ENCODE measurements at regions of chr3 and their contacts with region 1.

Region 1: GRCh38 chr3:50611464-50612233 is at the start of gene CISH:
- DNase-seq: peak; percentile 93 to 97
- H3K4me3 ChIP-seq: peak within 1 kb of the TSS; percentile 57 to 80
- H3K27ac ChIP-seq: peak within 1 kb of the TSS; percentile 75 to 78
- H3K4me1 ChIP-seq: peaks cover 0 to 57% (median 34%) of the 10 kb centered on the region in 4 donors
- H3K27me3 ChIP-seq: no peaks in the 10 kb centered on the region
- CTCF ChIP-seq: peak in 1 of 2 experiments; percentile 46

Region 2: GRCh38 chr3:50572158-50572557 is 39.5 kb before region 1 on chr3:
- intact Hi-C with region 1: loop called (anchors 1 kb)
- DNase-seq: peak; percentile 60 to 80
- H3K4me3 ChIP-seq: no peak overlapping the region
- H3K27ac ChIP-seq: peak overlapping the region in 1 of 2 donors; percentile 29
- H3K4me1 ChIP-seq: peaks cover 0 to 30% (median 19%) of the 10 kb centered on the region in 4 donors
- H3K27me3 ChIP-seq: no peaks in the 10 kb centered on the region
- CTCF ChIP-seq: peak; percentile 94 to 97

Region 3: GRCh38 chr3:50627407-50628051 is 15.9 kb after region 1 on chr3:
- intact Hi-C with region 1: no loop called
- DNase-seq: no peak
- H3K4me3 ChIP-seq: no peak overlapping the region
- H3K27ac ChIP-seq: no peak overlapping the region
- H3K4me1 ChIP-seq: peaks cover 0 to 24% (median 9%) of the 10 kb centered on the region in 4 donors
- H3K27me3 ChIP-seq: no peaks in the 10 kb centered on the region
- CTCF ChIP-seq: no peak

Region 4: DNA sequence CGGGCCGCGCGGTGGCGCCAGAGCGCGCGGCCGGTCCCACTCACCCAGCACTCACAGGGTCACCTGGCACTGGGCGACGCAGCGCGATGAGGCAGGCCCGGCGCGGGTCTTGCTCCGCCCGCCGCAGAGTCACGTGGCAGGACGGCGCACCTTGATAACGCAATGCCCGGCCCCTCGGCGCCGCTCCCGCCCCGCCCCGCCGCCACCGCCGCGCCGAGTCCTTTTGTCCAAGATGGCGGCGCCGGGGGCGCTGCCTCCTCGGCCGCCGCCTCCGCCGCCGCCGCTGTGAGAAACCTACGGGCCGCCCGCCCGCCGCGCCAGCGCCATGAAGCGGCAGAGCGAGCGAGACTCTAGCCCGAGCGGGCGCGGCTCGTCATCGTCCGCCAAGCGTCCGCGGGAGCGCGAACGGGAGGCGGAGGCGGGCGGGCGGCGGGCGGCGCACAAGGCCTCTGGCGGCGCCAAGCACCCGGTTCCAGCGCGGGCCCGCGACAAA is 779.5 kb after region 1 on chr3 and contains the start of gene RBM15B:
- intact Hi-C with region 1: loop called (anchors 5 kb)
- DNase-seq: peak; percentile 97 to 99
- H3K4me3 ChIP-seq: peak within 1 kb of the TSS; percentile 70 to 76
- H3K27ac ChIP-seq: peak within 1 kb of the TSS; percentile 83 to 84
- H3K4me1 ChIP-seq: peaks cover 0 to 90% (median 58%) of the 10 kb centered on the region in 4 donors
- H3K27me3 ChIP-seq: no peaks in the 10 kb centered on the region
- CTCF ChIP-seq: peak; percentile 86 to 90